ENCODE measurements at regions of chr19 and their contacts with region 1.

Region 1: GRCh38 chr19:36378625-36379509 is at the start of gene ZFP14:
- DNase-seq: peak; percentile 97
- ATAC-seq: peak; percentile 98
- H3K4me3 ChIP-seq: peak within 1 kb of the TSS; percentile 79 to 95 (median 85)
- H3K4me3 Mint-ChIP-seq: peak within 1 kb of the TSS; percentile 82
- H3K27ac ChIP-seq: peak within 1 kb of the TSS; percentile 83 to 94
- H3K27ac Mint-ChIP-seq: peak within 1 kb of the TSS; percentile 97
- H3K4me1 ChIP-seq: peaks cover 13 to 19% of the 10 kb centered on the region in 2 donors
- H3K4me1 Mint-ChIP-seq: peaks cover 19% of the 10 kb centered on the region
- H3K27me3 ChIP-seq: no peaks in the 10 kb centered on the region
- H3K27me3 Mint-ChIP-seq: no peaks in the 10 kb centered on the region
- CTCF ChIP-seq: peak; percentile 66
- total RNA-seq, gene ZFP14: 22.4 and 22.7 TPM in 2 replicates

Region 2: GRCh38 chr19:36331353-36332228 is 47.3 kb before region 1 on chr19:
- CTCF ChIA-PET with region 1: no interaction called
- POLR2A ChIA-PET with region 1: no interaction called
- intact Hi-C with region 1: loop called (anchors 5 kb)
- DNase-seq: peak; percentile 94
- ATAC-seq: peak; percentile 97
- H3K4me3 ChIP-seq: peak overlapping the region; percentile 55 to 76 (median 75)
- H3K4me3 Mint-ChIP-seq: peak overlapping the region; percentile 89
- H3K27ac ChIP-seq: peak overlapping the region; percentile 14 to 60
- H3K27ac Mint-ChIP-seq: peak overlapping the region; percentile 87
- H3K4me1 ChIP-seq: peaks cover 15 to 17% of the 10 kb centered on the region in 2 donors
- H3K4me1 Mint-ChIP-seq: peaks cover 24% of the 10 kb centered on the region
- H3K27me3 ChIP-seq: no peaks in the 10 kb centered on the region
- H3K27me3 Mint-ChIP-seq: no peaks in the 10 kb centered on the region
- CTCF ChIP-seq: no peak

Region 3: DNA sequence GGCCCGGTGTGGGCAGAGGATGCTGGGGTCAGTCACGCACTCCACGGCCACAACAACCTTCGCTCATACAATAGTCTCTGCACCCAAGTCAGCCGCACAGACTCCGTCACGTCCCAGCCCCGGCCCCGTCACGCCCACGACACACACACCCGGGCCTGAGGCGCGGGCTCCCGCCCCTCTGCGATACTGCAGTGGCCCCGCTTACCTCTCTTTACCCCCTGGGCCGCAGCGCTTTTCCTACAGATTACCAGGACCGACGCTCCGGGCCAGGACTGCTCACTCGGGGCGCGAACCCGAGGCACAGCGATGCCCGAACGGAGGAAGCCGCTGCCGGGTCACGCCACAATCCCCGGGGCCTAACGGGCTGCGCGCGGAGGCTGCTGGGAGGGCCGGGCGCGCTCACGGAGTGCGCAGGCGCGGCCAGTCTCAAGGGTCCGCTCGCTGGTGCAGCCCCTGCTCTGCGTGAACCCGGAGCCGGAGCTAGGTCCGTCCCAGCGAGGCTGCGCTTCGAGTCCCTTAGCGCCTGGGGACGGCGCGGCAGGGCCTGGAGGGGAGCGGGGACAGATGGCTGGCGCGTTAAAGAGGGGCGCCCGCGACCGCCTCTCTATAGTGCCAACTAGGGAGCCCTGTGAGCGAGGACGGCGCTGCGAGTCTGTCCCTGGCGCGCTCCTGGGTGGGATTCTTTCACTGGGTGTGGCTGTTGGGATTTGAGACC is 39.6 kb after region 1 on chr19 and contains the start of gene ZFP82:
- CTCF ChIA-PET with region 1: interaction called, 4 read pairs
- POLR2A ChIA-PET with region 1: interaction called, 3 read pairs
- intact Hi-C with region 1: loop called (anchors 1 kb)
- DNase-seq: peak; percentile 91
- ATAC-seq: peak; percentile 96
- H3K4me3 ChIP-seq: peak within 1 kb of the TSS; percentile 27 to 98 (median 85)
- H3K4me3 Mint-ChIP-seq: peak within 1 kb of the TSS; percentile 97
- H3K27ac ChIP-seq: peak within 1 kb of the TSS; percentile 90 to 95
- H3K27ac Mint-ChIP-seq: peak within 1 kb of the TSS; percentile 96
- H3K4me1 ChIP-seq: peaks cover 17 to 23% of the 10 kb centered on the region in 2 donors
- H3K4me1 Mint-ChIP-seq: peaks cover 33% of the 10 kb centered on the region
- H3K27me3 ChIP-seq: peaks cover 0 to 21% (median 13%) of the 10 kb centered on the region in 4 experiments
- H3K27me3 Mint-ChIP-seq: peaks cover 17% of the 10 kb centered on the region
- CTCF ChIP-seq: no peak
- total RNA-seq, gene ZFP82: 14.4 and 14.6 TPM in 2 replicates

Region 4: DNA sequence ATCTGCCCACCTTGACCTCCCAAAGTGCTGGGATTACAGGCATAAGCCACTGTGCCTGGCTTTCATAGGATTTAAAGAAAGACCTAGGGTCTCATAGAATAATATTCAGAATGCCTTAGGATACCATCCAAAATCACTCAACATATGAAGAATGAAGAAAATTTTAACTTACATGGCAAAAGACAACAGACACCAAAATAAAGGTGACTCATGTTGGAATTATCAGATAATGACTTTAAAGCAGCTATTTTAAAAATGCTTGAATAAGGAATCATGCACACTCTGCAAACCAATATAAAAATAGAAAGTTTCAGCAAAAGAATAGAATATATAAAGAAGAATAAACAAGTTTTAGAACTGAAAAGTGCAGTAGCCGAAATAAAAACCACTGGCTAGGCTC is 81.2 kb after region 1 on chr19:
- CTCF ChIA-PET with region 1: no interaction called
- POLR2A ChIA-PET with region 1: no interaction called
- intact Hi-C with region 1: no loop called
- DNase-seq: no peak
- ATAC-seq: no peak
- H3K4me3 ChIP-seq: no peak overlapping the region
- H3K4me3 Mint-ChIP-seq: no peak overlapping the region
- H3K27ac ChIP-seq: no peak overlapping the region
- H3K27ac Mint-ChIP-seq: no peak overlapping the region
- H3K4me1 ChIP-seq: no peaks in the 10 kb centered on the region
- H3K4me1 Mint-ChIP-seq: no peaks in the 10 kb centered on the region
- H3K27me3 ChIP-seq: no peaks in the 10 kb centered on the region
- H3K27me3 Mint-ChIP-seq: no peaks in the 10 kb centered on the region
- CTCF ChIP-seq: no peak

Region 5: GRCh38 chr19:36573020-36573885 is 194.4 kb after region 1 on chr19 and contains the start of gene ZNF529:
- CTCF ChIA-PET with region 1: no interaction called
- POLR2A ChIA-PET with region 1: interaction called, 4 read pairs
- intact Hi-C with region 1: loop called (anchors 1 kb)
- DNase-seq: peak; percentile 93
- ATAC-seq: peak; percentile 94
- H3K4me3 ChIP-seq: peak within 1 kb of the TSS; percentile 57 to 91 (median 88)
- H3K4me3 Mint-ChIP-seq: peak within 1 kb of the TSS; percentile 92
- H3K27ac ChIP-seq: peak within 1 kb of the TSS; percentile 82 to 98
- H3K27ac Mint-ChIP-seq: peak within 1 kb of the TSS; percentile 91
- H3K4me1 ChIP-seq: peaks cover 18% of the 10 kb centered on the region in 2 donors
- H3K4me1 Mint-ChIP-seq: peaks cover 34% of the 10 kb centered on the region
- H3K27me3 ChIP-seq: no peaks in the 10 kb centered on the region
- H3K27me3 Mint-ChIP-seq: no peaks in the 10 kb centered on the region
- CTCF ChIP-seq: no peak
- total RNA-seq, gene ZNF529: 33.2 and 35.4 TPM in 2 replicates

Region 6: DNA sequence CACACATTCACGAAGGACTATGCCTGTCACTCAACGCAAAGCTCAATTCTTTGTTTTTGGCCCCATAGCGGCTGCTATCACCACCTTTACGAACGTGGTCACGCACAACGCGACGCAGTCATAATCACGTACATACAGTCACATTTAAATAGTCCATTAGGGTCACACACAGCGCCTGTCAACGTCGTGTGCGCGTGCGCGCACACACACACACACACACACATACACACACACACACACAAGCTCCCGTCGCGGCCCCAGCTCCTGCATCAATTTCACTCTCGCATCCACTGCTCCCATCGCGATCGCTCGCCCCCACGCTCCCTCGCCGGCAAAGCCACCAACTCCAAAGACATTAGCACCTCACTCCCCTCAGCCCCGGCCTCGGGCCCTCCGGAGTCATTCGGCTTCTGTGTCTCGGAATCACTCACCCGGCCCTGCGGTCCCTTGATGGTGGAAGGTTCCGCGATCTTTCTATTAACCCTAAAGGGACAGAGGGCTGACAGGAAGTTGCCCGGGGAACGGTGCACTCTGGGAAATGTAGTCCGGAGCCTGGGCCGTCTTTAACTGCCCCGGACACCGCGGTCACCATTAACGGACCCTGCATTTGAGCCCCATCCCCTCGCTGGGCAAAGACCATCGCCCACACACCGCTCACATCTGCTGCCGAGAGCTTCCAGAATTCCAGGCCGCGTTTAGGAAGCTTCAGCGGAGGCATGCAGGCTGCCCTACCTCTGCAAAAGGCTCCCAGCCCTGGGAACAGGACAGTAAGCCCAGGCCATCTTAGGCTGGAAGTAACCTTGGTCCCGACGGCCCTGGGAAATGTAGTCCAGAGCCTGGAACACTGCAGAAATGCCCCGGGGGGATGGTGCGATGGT is 459.3 kb after region 1 on chr19 and contains the start of gene ZNF790:
- CTCF ChIA-PET with region 1: no interaction called
- POLR2A ChIA-PET with region 1: no interaction called
- intact Hi-C with region 1: loop called (anchors 2 kb)
- DNase-seq: peak; percentile 94
- ATAC-seq: peak; percentile 90
- H3K4me3 ChIP-seq: peak within 1 kb of the TSS; percentile 79 to 90 (median 83)
- H3K4me3 Mint-ChIP-seq: no peak within 1 kb of the TSS
- H3K27ac ChIP-seq: peak within 1 kb of the TSS; percentile 84 to 89
- H3K27ac Mint-ChIP-seq: no peak within 1 kb of the TSS
- H3K4me1 ChIP-seq: peaks cover 10 to 18% of the 10 kb centered on the region in 2 donors
- H3K4me1 Mint-ChIP-seq: no peaks in the 10 kb centered on the region
- H3K27me3 ChIP-seq: no peaks in the 10 kb centered on the region
- H3K27me3 Mint-ChIP-seq: no peaks in the 10 kb centered on the region
- CTCF ChIP-seq: no peak
- total RNA-seq, gene ZNF790: 14.8 and 15.1 TPM in 2 replicates

Region 7: GRCh38 chr19:36973021-36973843 is 594.4 kb after region 1 on chr19:
- CTCF ChIA-PET with region 1: no interaction called
- POLR2A ChIA-PET with region 1: no interaction called
- intact Hi-C with region 1: loop called (anchors 2 kb)
- DNase-seq: peak; percentile 92
- ATAC-seq: peak; percentile 97
- H3K4me3 ChIP-seq: peak overlapping the region; percentile 52 to 92 (median 79)
- H3K4me3 Mint-ChIP-seq: peak overlapping the region; percentile 97
- H3K27ac ChIP-seq: peak overlapping the region; percentile 49 to 71
- H3K27ac Mint-ChIP-seq: peak overlapping the region; percentile 91
- H3K4me1 ChIP-seq: peaks cover 11 to 16% of the 10 kb centered on the region in 2 donors
- H3K4me1 Mint-ChIP-seq: peaks cover 13% of the 10 kb centered on the region
- H3K27me3 ChIP-seq: no peaks in the 10 kb centered on the region
- H3K27me3 Mint-ChIP-seq: no peaks in the 10 kb centered on the region
- CTCF ChIP-seq: peak; percentile 78

Measured in B cell (primary cell).